MCF 10A (cell line): ENCODE measurements at regions of chr17 and their contacts with region 1.

Region 1: GRCh38 chr17:76671123-76671911 is 27.8 kb upstream of the ST6GALNAC1 start:
- DNase-seq: peak; percentile 100
- H3K4me3 Mint-ChIP-seq: peak overlapping the region; percentile 89
- H3K27ac Mint-ChIP-seq: peak overlapping the region; percentile 92
- H3K4me1 Mint-ChIP-seq: no peaks in the 10 kb centered on the region
- H3K27me3 Mint-ChIP-seq: no peaks in the 10 kb centered on the region
- CTCF ChIP-seq: no peak

Region 2: DNA sequence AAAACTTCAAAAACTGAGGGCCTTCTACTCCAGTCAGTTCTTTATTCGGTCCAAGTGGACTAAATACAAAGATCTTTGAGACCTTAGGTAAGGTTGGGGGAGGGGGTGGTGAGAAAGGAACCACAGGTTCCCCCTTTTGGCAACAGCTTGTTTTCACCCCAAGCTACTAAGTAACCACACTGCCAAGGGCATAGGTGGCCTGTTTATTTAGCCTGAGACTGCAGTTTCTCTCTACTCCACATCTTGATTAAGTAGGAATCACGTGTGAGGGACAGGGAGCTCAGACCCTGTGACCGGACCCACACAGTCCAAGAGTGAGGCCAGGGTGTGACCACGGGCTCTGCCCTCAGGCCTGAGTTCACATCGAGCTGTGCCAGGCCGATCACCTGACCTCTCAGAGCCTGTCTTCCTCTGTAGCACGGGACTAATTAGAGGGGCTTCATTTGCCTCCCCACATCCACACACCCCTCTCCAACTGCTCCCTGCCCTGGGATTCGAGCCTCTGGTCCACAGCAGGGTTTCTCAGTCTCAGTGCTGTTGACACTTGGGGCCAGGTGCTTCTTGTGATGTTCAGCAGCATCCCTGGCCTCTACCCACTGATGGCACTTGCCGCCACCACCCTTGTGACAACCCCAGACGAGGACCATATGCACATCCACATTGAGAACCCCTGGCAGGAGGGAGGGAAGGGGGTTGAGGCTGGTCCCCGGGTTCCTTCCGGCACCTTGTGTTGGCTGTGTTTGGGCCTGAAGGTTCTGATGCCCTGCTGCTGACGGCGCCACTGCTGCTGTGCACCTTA is 103.5 kb before region 1 on chr17:
- CTCF ChIA-PET with region 1: no interaction called
- POLR2A ChIA-PET with region 1: interaction called, 10 read pairs
- intact Hi-C with region 1: no loop called
- DNase-seq: peak; percentile 35
- H3K4me3 Mint-ChIP-seq: no peak overlapping the region
- H3K27ac Mint-ChIP-seq: peak overlapping the region; percentile 50
- H3K4me1 Mint-ChIP-seq: peaks cover 27% of the 10 kb centered on the region
- H3K27me3 Mint-ChIP-seq: no peaks in the 10 kb centered on the region
- CTCF ChIP-seq: no peak

Region 3: GRCh38 chr17:76659928-76660614 is 11.2 kb before region 1 on chr17:
- CTCF ChIA-PET with region 1: interaction called, 4 read pairs
- POLR2A ChIA-PET with region 1: interaction called, 12 read pairs
- intact Hi-C with region 1: no loop called
- DNase-seq: peak; percentile 30
- H3K4me3 Mint-ChIP-seq: no peak overlapping the region
- H3K27ac Mint-ChIP-seq: no peak overlapping the region
- H3K4me1 Mint-ChIP-seq: peaks cover 9% of the 10 kb centered on the region
- H3K27me3 Mint-ChIP-seq: no peaks in the 10 kb centered on the region
- CTCF ChIP-seq: no peak

Region 4: GRCh38 chr17:76681222-76682137 is 10.2 kb after region 1 on chr17:
- CTCF ChIA-PET with region 1: interaction called, 8 read pairs
- POLR2A ChIA-PET with region 1: interaction called, 10 read pairs
- intact Hi-C with region 1: no loop called
- DNase-seq: peak; percentile 69
- H3K4me3 Mint-ChIP-seq: no peak overlapping the region
- H3K27ac Mint-ChIP-seq: no peak overlapping the region
- H3K4me1 Mint-ChIP-seq: peaks cover 5% of the 10 kb centered on the region
- H3K27me3 Mint-ChIP-seq: no peaks in the 10 kb centered on the region
- CTCF ChIP-seq: peak; percentile 65

Region 5: GRCh38 chr17:76709077-76709950 is 38.0 kb after region 1 on chr17:
- CTCF ChIA-PET with region 1: interaction called, 5 read pairs
- POLR2A ChIA-PET with region 1: interaction called, 12 read pairs
- intact Hi-C with region 1: no loop called
- DNase-seq: peak; percentile 58
- H3K4me3 Mint-ChIP-seq: peak overlapping the region; percentile 76
- H3K27ac Mint-ChIP-seq: peak overlapping the region; percentile 39
- H3K4me1 Mint-ChIP-seq: peaks cover 9% of the 10 kb centered on the region
- H3K27me3 Mint-ChIP-seq: no peaks in the 10 kb centered on the region
- CTCF ChIP-seq: no peak

Region 6: DNA sequence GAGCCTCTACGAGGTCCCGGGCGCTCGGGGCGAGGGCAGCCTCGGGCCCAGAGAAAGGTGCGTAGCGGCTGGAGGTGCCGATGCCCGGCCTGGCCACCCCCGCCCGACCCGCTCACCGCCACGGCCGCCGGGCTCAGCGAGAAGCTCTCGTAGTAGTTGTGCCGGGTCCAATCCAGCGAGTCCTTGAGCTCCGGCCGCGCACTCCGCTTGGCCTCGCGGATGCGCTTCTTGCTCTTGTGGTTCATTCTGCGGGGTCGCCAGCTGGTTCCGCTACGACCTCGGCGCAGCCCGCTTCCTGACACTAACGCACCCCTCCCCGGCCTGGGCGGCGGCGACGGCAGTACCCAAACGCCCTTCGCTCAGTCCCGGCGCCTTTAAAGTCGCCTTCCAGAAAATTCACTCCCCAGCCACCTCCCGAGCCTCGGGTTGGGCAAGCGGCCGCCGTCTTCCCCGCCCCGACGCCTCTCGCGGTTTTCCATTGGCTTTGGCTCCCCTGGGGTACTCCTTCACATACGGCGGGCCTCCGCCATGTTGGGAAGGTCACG is 55.0 kb after region 1 on chr17 and contains the start of gene JMJD6:
- CTCF ChIA-PET with region 1: no interaction called
- POLR2A ChIA-PET with region 1: interaction called, 10 read pairs
- intact Hi-C with region 1: no loop called
- DNase-seq: peak; percentile 97
- H3K4me3 Mint-ChIP-seq: peak within 1 kb of the TSS; percentile 90
- H3K27ac Mint-ChIP-seq: peak within 1 kb of the TSS; percentile 94
- H3K4me1 Mint-ChIP-seq: peaks cover 6% of the 10 kb centered on the region
- H3K27me3 Mint-ChIP-seq: no peaks in the 10 kb centered on the region
- CTCF ChIP-seq: no peak
- total RNA-seq, gene JMJD6: 29.4 and 45.8 TPM in 2 replicates